ENCODE measurements at regions of chr19 and their contacts with region 1.

Region 1: DNA sequence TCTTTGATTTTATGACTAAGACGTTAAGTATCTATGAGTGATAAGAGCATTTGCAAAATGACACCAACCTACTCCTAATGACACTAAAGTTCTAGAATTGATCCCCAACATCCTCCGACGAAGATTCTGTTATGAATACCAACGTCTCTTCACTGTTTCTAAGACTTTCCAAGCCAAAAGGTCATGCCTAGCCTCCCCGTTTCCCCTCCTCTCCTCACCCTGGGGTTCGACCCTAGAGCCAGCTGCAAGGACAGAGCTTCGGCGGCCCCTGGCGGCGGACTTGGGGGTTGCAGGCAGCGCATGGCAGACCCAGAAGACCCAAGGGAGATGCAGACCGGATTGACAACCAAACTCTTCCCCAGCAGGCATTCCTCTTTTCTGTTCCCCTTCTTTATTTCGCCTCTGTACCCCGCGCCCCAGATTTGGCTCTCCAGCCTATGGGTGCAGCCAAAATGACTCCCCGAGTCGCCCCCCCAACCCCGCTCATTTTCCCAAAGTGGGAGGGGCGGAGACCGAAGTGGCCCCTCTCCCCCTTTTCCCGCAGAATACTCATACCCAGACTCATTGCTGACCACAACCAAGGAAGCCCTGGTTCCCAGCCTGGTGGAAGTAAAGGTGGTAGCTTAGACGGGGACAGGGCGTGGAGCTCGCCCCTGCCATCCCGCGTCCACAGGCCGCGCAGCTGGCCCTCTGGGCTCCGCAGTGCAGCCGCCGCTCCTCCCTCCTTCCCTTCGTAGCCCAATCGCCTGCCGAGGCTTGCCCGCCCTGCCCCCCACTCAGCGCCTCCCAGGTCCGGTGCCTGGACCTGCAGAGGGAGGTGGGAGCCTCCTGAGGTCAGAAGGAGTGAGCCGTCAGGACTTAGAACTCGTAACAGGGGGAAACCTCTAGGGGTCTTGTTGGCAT is 4.1 kb upstream of the EML2 start:
- DNase-seq: peak; percentile 97
- H3K4me3 Mint-ChIP-seq: peak overlapping the region; percentile 82
- H3K27ac Mint-ChIP-seq: peak overlapping the region; percentile 98
- H3K4me1 Mint-ChIP-seq: peaks cover 42% of the 10 kb centered on the region
- H3K27me3 Mint-ChIP-seq: peaks cover 6% of the 10 kb centered on the region

Region 2: GRCh38 chr19:45478454-45479238 is 164.6 kb before region 1 on chr19:
- intact Hi-C with region 1: loop called (anchors 1 kb)
- DNase-seq: peak; percentile 97
- H3K4me3 Mint-ChIP-seq: peak overlapping the region; percentile 68
- H3K27ac Mint-ChIP-seq: peak overlapping the region; percentile 91
- H3K4me1 Mint-ChIP-seq: peaks cover 29% of the 10 kb centered on the region
- H3K27me3 Mint-ChIP-seq: peaks cover 32% of the 10 kb centered on the region

Region 3: GRCh38 chr19:45523642-45524256 is 119.5 kb before region 1 on chr19:
- intact Hi-C with region 1: loop called (anchors 1 kb)
- DNase-seq: peak; percentile 92
- H3K4me3 Mint-ChIP-seq: no peak overlapping the region
- H3K27ac Mint-ChIP-seq: peak overlapping the region; percentile 53
- H3K4me1 Mint-ChIP-seq: peaks cover 18% of the 10 kb centered on the region
- H3K27me3 Mint-ChIP-seq: no peaks in the 10 kb centered on the region

Region 4: GRCh38 chr19:45607071-45608029 is 35.9 kb before region 1 on chr19:
- intact Hi-C with region 1: loop called (anchors 1 kb)
- DNase-seq: peak; percentile 84
- H3K4me3 Mint-ChIP-seq: peak overlapping the region; percentile 34
- H3K27ac Mint-ChIP-seq: peak overlapping the region; percentile 87
- H3K4me1 Mint-ChIP-seq: peaks cover 7% of the 10 kb centered on the region
- H3K27me3 Mint-ChIP-seq: peaks cover 11% of the 10 kb centered on the region

Region 5: GRCh38 chr19:45632468-45633196 is 10.6 kb before region 1 on chr19:
- intact Hi-C with region 1: no loop called
- DNase-seq: peak; percentile 77
- H3K4me3 Mint-ChIP-seq: no peak overlapping the region
- H3K27ac Mint-ChIP-seq: peak overlapping the region; percentile 39
- H3K4me1 Mint-ChIP-seq: peaks cover 11% of the 10 kb centered on the region
- H3K27me3 Mint-ChIP-seq: no peaks in the 10 kb centered on the region

Region 6: GRCh38 chr19:45667620-45668341 is 24.5 kb after region 1 on chr19 and contains the start of gene GIPR:
- intact Hi-C with region 1: loop called (anchors 2 kb)
- DNase-seq: peak; percentile 84
- H3K4me3 Mint-ChIP-seq: peak within 1 kb of the TSS; percentile 94
- H3K27ac Mint-ChIP-seq: peak within 1 kb of the TSS; percentile 83
- H3K4me1 Mint-ChIP-seq: peaks cover 27% of the 10 kb centered on the region
- H3K27me3 Mint-ChIP-seq: peaks cover 9% of the 10 kb centered on the region
- total RNA-seq, gene GIPR: 4.2 and 5.8 TPM in 2 replicates

Region 7: GRCh38 chr19:45717166-45717982 is 74.1 kb after region 1 on chr19:
- intact Hi-C with region 1: loop called (anchors 1 kb)
- DNase-seq: peak; percentile 99
- H3K4me3 Mint-ChIP-seq: peak overlapping the region; percentile 88
- H3K27ac Mint-ChIP-seq: peak overlapping the region; percentile 97
- H3K4me1 Mint-ChIP-seq: peaks cover 33% of the 10 kb centered on the region
- H3K27me3 Mint-ChIP-seq: peaks cover 2% of the 10 kb centered on the region

Region 8: GRCh38 chr19:45739498-45740439 is 96.5 kb after region 1 on chr19:
- intact Hi-C with region 1: no loop called
- DNase-seq: no peak
- H3K4me3 Mint-ChIP-seq: no peak overlapping the region
- H3K27ac Mint-ChIP-seq: no peak overlapping the region
- H3K4me1 Mint-ChIP-seq: no peaks in the 10 kb centered on the region
- H3K27me3 Mint-ChIP-seq: peaks cover 10% of the 10 kb centered on the region

Measured in activated CD4-positive, alpha-beta T cell treated with anti-CD3 and anti-CD28 coated beads, Interleukin-2, amount 10 ng/mL, durations not matched to agents 24 days and 14 days (primary cell).